Activated CD4-positive, alpha-beta T cell treated with anti-CD3 and anti-CD28 coated beads for 36 hours (primary cell): ENCODE measurements at regions of chr9 and their contacts with region 1.

Region 1: GRCh38 chr9:114155263-114155972 is at the start of gene COL27A1:
- DNase-seq: peak; percentile 92
- ATAC-seq: peak; percentile 91
- H3K4me3 Mint-ChIP-seq: peak within 1 kb of the TSS; percentile 83
- H3K27ac Mint-ChIP-seq: peak within 1 kb of the TSS; percentile 80
- H3K4me1 Mint-ChIP-seq: peaks cover 23% of the 10 kb centered on the region
- H3K27me3 Mint-ChIP-seq: peaks cover 43% of the 10 kb centered on the region
- total RNA-seq, gene COL27A1: 8.9 to 9.1 TPM

Region 2: GRCh38 chr9:114082017-114082762 is 73.2 kb before region 1 on chr9:
- CTCF ChIA-PET with region 1: interaction called, 7 read pairs
- POLR2A ChIA-PET with region 1: no interaction called
- intact Hi-C with region 1: loop called in 1 of 2 experiments (anchors 2 kb)
- DNase-seq: peak; percentile 91
- ATAC-seq: peak; percentile 96
- H3K4me3 Mint-ChIP-seq: no peak overlapping the region
- H3K27ac Mint-ChIP-seq: no peak overlapping the region
- H3K4me1 Mint-ChIP-seq: no peaks in the 10 kb centered on the region
- H3K27me3 Mint-ChIP-seq: peaks cover under 1% of the 10 kb centered on the region

Region 3: GRCh38 chr9:114098016-114098935 is 57.1 kb before region 1 on chr9:
- CTCF ChIA-PET with region 1: no interaction called
- POLR2A ChIA-PET with region 1: no interaction called
- intact Hi-C with region 1: loop called in 1 of 2 experiments (anchors 1 kb)
- DNase-seq: peak; percentile 71
- ATAC-seq: peak; percentile 86
- H3K4me3 Mint-ChIP-seq: no peak overlapping the region
- H3K27ac Mint-ChIP-seq: no peak overlapping the region
- H3K4me1 Mint-ChIP-seq: no peaks in the 10 kb centered on the region
- H3K27me3 Mint-ChIP-seq: peaks cover 36% of the 10 kb centered on the region

Region 4: GRCh38 chr9:114108016-114108833 is 47.2 kb before region 1 on chr9:
- CTCF ChIA-PET with region 1: interaction called, 7 read pairs
- POLR2A ChIA-PET with region 1: no interaction called
- intact Hi-C with region 1: loop called (anchors 2 to 5 kb)
- DNase-seq: peak; percentile 83
- ATAC-seq: peak; percentile 92
- H3K4me3 Mint-ChIP-seq: no peak overlapping the region
- H3K27ac Mint-ChIP-seq: no peak overlapping the region
- H3K4me1 Mint-ChIP-seq: no peaks in the 10 kb centered on the region
- H3K27me3 Mint-ChIP-seq: peaks cover 10% of the 10 kb centered on the region

Region 5: GRCh38 chr9:114196979-114197622 is 41.7 kb after region 1 on chr9:
- CTCF ChIA-PET with region 1: no interaction called
- POLR2A ChIA-PET with region 1: no interaction called
- intact Hi-C with region 1: no loop called
- DNase-seq: no peak
- ATAC-seq: no peak
- H3K4me3 Mint-ChIP-seq: no peak overlapping the region
- H3K27ac Mint-ChIP-seq: no peak overlapping the region
- H3K4me1 Mint-ChIP-seq: no peaks in the 10 kb centered on the region
- H3K27me3 Mint-ChIP-seq: no peaks in the 10 kb centered on the region

Region 6: GRCh38 chr9:114271641-114272081 is 116.2 kb after region 1 on chr9:
- CTCF ChIA-PET with region 1: no interaction called
- POLR2A ChIA-PET with region 1: no interaction called
- intact Hi-C with region 1: loop called in 1 of 2 experiments (anchors 1 kb)
- DNase-seq: peak; percentile 55
- ATAC-seq: no peak
- H3K4me3 Mint-ChIP-seq: no peak overlapping the region
- H3K27ac Mint-ChIP-seq: no peak overlapping the region
- H3K4me1 Mint-ChIP-seq: no peaks in the 10 kb centered on the region
- H3K27me3 Mint-ChIP-seq: no peaks in the 10 kb centered on the region

Region 7: GRCh38 chr9:114285166-114285867 is 129.9 kb after region 1 on chr9:
- CTCF ChIA-PET with region 1: interaction called, 35 read pairs
- POLR2A ChIA-PET with region 1: no interaction called
- intact Hi-C with region 1: loop called in 1 of 2 experiments (anchors 5 kb)
- DNase-seq: no peak
- ATAC-seq: no peak
- H3K4me3 Mint-ChIP-seq: no peak overlapping the region
- H3K27ac Mint-ChIP-seq: no peak overlapping the region
- H3K4me1 Mint-ChIP-seq: no peaks in the 10 kb centered on the region
- H3K27me3 Mint-ChIP-seq: no peaks in the 10 kb centered on the region

Region 8: GRCh38 chr9:114291064-114291474 is 135.7 kb after region 1 on chr9:
- CTCF ChIA-PET with region 1: interaction called, 35 read pairs
- POLR2A ChIA-PET with region 1: interaction called, 3 read pairs
- intact Hi-C with region 1: loop called (anchors 1 to 5 kb)
- DNase-seq: peak; percentile 83
- ATAC-seq: peak; percentile 42
- H3K4me3 Mint-ChIP-seq: no peak overlapping the region
- H3K27ac Mint-ChIP-seq: no peak overlapping the region
- H3K4me1 Mint-ChIP-seq: no peaks in the 10 kb centered on the region
- H3K27me3 Mint-ChIP-seq: peaks cover 2% of the 10 kb centered on the region